Activated CD8-positive, alpha-beta T cell treated with anti-CD3 and anti-CD28 coated beads for 36 hours (primary cell): ENCODE measurements at regions of chr20 and their contacts with region 1.

Region 1: GRCh38 chr20:44683263-44684046 is 31.7 kb upstream of the CCN5 start:
- DNase-seq: peak; percentile 79
- ATAC-seq: peak; percentile 84
- H3K4me3 Mint-ChIP-seq: no peak overlapping the region
- H3K27ac Mint-ChIP-seq: no peak overlapping the region
- H3K4me1 Mint-ChIP-seq: peaks cover 6% of the 10 kb centered on the region
- H3K27me3 Mint-ChIP-seq: peaks cover 2% of the 10 kb centered on the region
- CTCF ChIP-seq: peak; percentile 70

Region 2: GRCh38 chr20:44609511-44610312 is 73.7 kb before region 1 on chr20:
- CTCF ChIA-PET with region 1: interaction called, 15 read pairs
- POLR2A ChIA-PET with region 1: interaction called, 3 read pairs
- intact Hi-C with region 1: loop called (anchors 10 kb)
- DNase-seq: peak; percentile 91
- ATAC-seq: peak; percentile 99
- H3K4me3 Mint-ChIP-seq: peak overlapping the region; percentile 39
- H3K27ac Mint-ChIP-seq: peak overlapping the region; percentile 86
- H3K4me1 Mint-ChIP-seq: peaks cover 33% of the 10 kb centered on the region
- H3K27me3 Mint-ChIP-seq: no peaks in the 10 kb centered on the region
- CTCF ChIP-seq: peak; percentile 94

Region 3: DNA sequence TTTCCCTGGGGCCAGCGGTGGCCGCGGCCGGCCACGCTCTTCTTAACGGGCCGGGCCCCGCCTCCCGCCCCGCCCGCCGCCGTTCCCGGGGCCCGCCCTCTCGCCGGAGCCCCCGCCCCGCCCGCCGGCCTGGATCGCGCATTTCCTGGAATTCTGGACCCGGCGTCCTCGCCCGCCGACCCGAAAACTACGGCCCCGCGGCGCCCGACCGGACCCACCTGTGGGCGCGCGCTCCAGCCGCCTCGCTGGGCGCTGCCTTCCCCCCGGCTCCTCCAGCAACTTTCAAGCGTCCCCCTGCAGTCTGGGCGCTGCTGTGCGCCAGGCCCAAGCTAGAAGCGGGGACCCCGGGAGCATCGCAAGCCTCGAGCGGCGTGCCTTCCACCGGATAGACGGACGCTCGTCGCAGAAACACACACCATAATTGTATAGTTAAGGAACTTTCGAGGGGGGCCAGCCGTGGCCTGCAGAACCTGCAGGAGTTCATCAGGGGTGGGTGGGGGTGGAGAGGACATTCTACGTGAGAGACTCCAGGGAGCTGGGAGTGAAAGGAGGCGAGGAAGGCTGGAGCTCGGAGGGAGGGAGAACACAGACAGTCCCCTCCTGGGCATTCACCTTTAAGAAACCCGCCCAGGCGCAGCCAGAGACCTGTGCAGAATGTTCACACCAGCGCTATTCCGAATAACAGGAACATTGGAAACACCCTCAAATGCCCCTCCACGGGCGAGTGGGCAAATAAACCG is 31.6 kb before region 1 on chr20 and contains the start of gene ADA:
- CTCF ChIA-PET with region 1: interaction called, 32 read pairs
- POLR2A ChIA-PET with region 1: interaction called, 3 read pairs
- intact Hi-C with region 1: no loop called
- DNase-seq: peak; percentile 67
- ATAC-seq: peak; percentile 60
- H3K4me3 Mint-ChIP-seq: peak within 1 kb of the TSS; percentile 75
- H3K27ac Mint-ChIP-seq: peak within 1 kb of the TSS; percentile 75
- H3K4me1 Mint-ChIP-seq: peaks cover 29% of the 10 kb centered on the region
- H3K27me3 Mint-ChIP-seq: no peaks in the 10 kb centered on the region
- CTCF ChIP-seq: no peak
- total RNA-seq, gene ADA: 32.8 to 36.7 TPM

Region 4: GRCh38 chr20:44702776-44703175 is 19.3 kb after region 1 on chr20:
- CTCF ChIA-PET with region 1: interaction called, 14 read pairs
- POLR2A ChIA-PET with region 1: no interaction called
- intact Hi-C with region 1: no loop called
- DNase-seq: no peak
- ATAC-seq: no peak
- H3K4me3 Mint-ChIP-seq: no peak overlapping the region
- H3K27ac Mint-ChIP-seq: no peak overlapping the region
- H3K4me1 Mint-ChIP-seq: no peaks in the 10 kb centered on the region
- H3K27me3 Mint-ChIP-seq: no peaks in the 10 kb centered on the region
- CTCF ChIP-seq: no peak

Region 5: GRCh38 chr20:44738813-44739477 is 55.5 kb after region 1 on chr20:
- CTCF ChIA-PET with region 1: interaction called, 118 read pairs
- POLR2A ChIA-PET with region 1: no interaction called
- intact Hi-C with region 1: no loop called
- DNase-seq: peak; percentile 78
- ATAC-seq: peak; percentile 83
- H3K4me3 Mint-ChIP-seq: peak overlapping the region; percentile 57
- H3K27ac Mint-ChIP-seq: no peak overlapping the region
- H3K4me1 Mint-ChIP-seq: peaks cover 10% of the 10 kb centered on the region
- H3K27me3 Mint-ChIP-seq: no peaks in the 10 kb centered on the region
- CTCF ChIP-seq: no peak

Region 6: GRCh38 chr20:44866703-44867335 is 183.4 kb after region 1 on chr20:
- CTCF ChIA-PET with region 1: interaction called, 46 read pairs
- POLR2A ChIA-PET with region 1: no interaction called
- intact Hi-C with region 1: loop called (anchors 5 kb)
- DNase-seq: no peak
- ATAC-seq: no peak
- H3K4me3 Mint-ChIP-seq: peak overlapping the region; percentile 52
- H3K27ac Mint-ChIP-seq: no peak overlapping the region
- H3K4me1 Mint-ChIP-seq: peaks cover 12% of the 10 kb centered on the region
- H3K27me3 Mint-ChIP-seq: peaks cover 3% of the 10 kb centered on the region
- CTCF ChIP-seq: no peak